Activated CD4-positive, alpha-beta memory T cell treated with anti-CD3 and anti-CD28 coated beads for 36 hours (primary cell): ENCODE measurements at regions of chr3 and their contacts with region 1.

Region 1: DNA sequence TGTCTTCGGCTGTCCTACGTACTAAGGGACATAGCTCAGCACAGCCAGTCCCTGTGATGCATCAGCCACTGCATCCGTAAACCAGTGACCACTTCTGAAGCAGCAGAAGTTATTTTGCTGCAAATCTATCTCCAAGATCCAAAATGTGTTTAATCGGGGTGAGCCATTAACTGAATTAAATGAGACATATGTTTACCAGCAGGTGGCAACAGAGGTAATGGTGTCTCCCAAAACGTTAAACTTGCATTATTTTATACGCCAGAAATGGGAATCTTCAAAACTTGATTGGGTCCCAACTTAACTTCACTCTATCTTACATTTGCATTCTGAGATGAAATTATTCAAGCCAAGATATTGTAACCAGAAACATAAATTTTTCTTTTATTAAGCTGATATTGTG is 75.3 kb upstream of the BOC start:
- DNase-seq: no peak
- H3K4me3 Mint-ChIP-seq: no peak overlapping the region
- H3K27ac Mint-ChIP-seq: no peak overlapping the region
- H3K4me1 Mint-ChIP-seq: peaks cover 3% of the 10 kb centered on the region
- H3K27me3 Mint-ChIP-seq: no peaks in the 10 kb centered on the region

Region 2: GRCh38 chr3:113051302-113051711 is 84.8 kb before region 1 on chr3:
- CTCF ChIA-PET with region 1: interaction called, 3 read pairs
- POLR2A ChIA-PET with region 1: no interaction called
- intact Hi-C with region 1: loop called (anchors 1 kb)
- DNase-seq: peak; percentile 92
- H3K4me3 Mint-ChIP-seq: no peak overlapping the region
- H3K27ac Mint-ChIP-seq: no peak overlapping the region
- H3K4me1 Mint-ChIP-seq: peaks cover 5% of the 10 kb centered on the region
- H3K27me3 Mint-ChIP-seq: no peaks in the 10 kb centered on the region

Region 3: DNA sequence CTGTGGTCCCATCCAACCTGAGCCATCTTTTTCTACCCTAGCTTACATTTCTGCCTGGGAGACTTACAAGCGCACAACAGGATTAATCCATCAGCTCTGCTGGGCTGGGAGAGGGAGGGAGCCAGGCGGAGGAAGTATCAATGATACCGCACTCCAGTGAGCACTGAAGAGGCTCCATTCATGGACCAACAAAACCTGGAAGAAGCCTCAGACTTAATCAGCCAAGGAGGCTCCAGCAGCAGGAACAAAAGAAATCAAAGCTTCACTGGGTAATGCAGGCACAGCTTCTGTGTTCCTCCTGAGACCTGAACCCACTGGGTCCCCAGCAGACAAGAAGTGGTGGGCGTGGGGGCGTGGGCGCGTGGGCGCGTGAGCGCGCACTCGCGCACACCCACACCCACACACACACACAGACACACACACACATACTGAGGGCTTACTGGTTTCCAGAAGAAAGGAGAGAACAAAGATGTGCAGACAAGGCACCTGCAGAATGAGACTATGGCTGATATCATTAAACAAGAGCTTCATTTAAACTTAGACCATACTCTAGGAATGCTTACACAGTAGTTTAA is 11.7 kb before region 1 on chr3:
- CTCF ChIA-PET with region 1: no interaction called
- POLR2A ChIA-PET with region 1: no interaction called
- intact Hi-C with region 1: no loop called
- DNase-seq: no peak
- H3K4me3 Mint-ChIP-seq: no peak overlapping the region
- H3K27ac Mint-ChIP-seq: no peak overlapping the region
- H3K4me1 Mint-ChIP-seq: no peaks in the 10 kb centered on the region
- H3K27me3 Mint-ChIP-seq: no peaks in the 10 kb centered on the region